Right ventricle myocardium superior (tissue), 1 donor: ENCODE measurements at regions of chr20 and their contacts with region 1.

Region 1: DNA sequence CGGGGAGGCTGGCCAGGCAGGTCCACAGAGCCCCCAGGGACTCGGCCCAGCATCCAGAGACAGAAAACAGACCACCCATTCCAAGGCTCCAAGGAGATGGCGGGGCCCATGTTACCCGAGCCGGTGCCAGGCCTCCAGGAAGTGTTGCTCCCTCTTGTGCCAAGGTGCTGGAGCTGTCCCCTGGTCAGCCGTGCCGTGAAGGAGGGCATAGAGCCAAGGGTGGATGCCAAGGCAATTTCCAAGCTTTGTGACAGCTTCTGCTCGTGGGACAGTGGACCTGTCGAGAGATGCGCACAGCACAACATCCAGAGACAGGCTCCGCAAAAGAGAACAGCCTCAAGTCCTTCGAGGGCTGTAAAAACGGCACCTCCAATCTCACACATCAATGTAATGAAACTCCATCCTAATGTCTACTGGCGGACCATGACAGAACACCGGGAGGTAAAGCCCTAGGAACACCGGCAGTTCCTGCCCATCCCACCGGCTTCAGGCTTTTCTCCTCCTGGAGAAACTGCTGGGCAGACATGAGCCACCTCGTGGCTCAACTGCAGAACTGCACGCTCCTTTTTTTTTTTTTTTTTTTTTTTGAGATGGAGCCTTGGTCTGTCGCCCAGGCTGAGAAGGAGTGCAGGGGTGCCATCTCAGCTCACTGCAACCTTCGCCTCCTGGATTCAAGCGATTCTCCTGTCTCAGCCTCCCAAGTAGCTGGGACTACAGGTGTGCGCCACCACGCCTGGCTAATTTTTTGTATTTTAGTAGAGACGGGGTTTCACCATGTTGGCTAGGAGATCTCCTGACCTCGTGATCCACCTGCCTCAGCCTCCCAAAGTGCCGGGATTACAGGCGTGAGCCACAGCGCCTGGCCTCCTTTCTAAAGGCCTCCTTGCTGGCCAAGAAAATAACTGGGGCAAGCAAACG is 30.9 kb upstream of the AVP start:
- DNase-seq: no peak
- ATAC-seq: peak; percentile 55

Region 2: GRCh38 chr20:3032624-3033023 is 82.8 kb before region 1 on chr20:
- intact Hi-C with region 1: no loop called
- DNase-seq: peak; percentile 67
- ATAC-seq: peak; percentile 64

Region 3: GRCh38 chr20:3051385-3052019 is 63.9 kb before region 1 on chr20:
- intact Hi-C with region 1: loop called (anchors 5 kb)
- DNase-seq: no peak
- ATAC-seq: no peak

Region 4: DNA sequence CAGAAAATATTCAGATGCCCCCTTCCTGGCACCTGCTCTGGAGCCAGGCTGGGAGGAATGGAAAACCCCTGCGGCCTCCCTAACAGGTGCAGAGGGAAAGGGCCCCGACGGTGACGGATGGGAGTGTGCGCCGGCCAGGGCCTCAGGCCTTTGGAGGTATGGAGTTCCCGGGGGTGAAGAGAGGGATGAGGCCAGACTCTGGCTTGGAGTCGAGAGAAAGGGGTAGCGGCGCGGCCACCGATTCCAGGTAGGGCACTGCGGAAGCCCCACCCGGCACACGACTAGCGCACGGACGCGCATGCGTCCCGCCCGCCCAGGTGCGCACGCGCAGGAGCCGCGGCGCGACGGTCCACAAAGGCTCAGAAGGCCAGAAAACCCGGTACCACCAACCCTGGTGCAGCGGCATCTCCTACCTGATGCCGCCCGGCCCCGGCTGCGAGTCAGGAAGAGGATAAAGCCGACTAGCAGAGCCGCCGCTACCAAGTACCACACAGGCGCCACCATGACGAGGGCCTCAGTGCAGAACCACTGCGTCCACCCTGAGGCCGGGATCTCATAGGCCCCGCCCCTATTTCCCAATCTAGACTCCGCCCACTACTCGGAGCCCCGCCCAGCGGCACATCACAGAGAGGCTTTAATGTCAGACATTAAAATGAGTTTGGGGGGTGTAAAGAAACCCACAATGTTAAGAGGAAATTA is 88.8 kb after region 1 on chr20 and contains the start of gene DDRGK1:
- intact Hi-C with region 1: no loop called
- DNase-seq: peak; percentile 94
- ATAC-seq: peak; percentile 97
- total RNA-seq, gene DDRGK1: 36.4 TPM

Region 5: GRCh38 chr20:3340443-3340842 is 225.0 kb after region 1 on chr20:
- intact Hi-C with region 1: no loop called
- DNase-seq: peak; percentile 90
- ATAC-seq: peak; percentile 92